ENCODE measurements at regions of chr20 and their contacts with region 1.

Region 1: DNA sequence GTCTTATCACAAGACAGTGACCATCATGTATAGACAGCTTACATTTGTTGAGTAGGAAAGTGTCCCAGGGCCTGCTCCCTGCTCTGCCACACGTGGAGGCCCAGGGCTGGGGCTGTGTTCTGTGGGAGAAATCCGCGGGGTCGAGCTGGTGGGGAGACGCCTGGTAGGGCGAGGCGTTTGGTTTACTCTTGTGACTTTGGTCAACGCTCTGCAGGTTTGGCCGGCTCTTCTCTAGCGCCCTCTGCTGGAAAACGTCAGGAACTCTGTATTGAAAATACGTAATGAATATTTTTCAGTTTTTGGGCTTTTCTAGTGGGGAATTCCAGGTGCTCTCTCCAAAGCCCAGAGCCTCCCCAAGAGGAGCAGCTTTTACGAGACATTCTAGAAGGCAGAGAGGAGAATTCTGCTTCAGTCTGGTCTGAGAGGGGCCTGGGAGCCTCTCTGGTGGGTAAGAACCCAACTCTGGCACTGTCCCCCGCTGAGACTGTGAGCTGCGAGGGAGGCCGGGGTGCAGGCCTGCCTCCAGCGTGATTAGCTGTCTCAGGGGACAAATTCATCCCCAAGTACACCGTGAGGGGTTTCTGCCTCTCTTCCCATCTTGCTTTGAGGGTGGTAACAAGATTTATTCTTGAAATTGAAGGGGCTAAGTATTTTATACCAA is 112.6 kb upstream of the RALGAPA2 start:
- DNase-seq: peak; percentile 66
- H3K4me3 Mint-ChIP-seq: no peak overlapping the region
- H3K27ac Mint-ChIP-seq: no peak overlapping the region
- H3K4me1 Mint-ChIP-seq: peaks cover 16% of the 10 kb centered on the region
- H3K27me3 Mint-ChIP-seq: peaks cover 15% of the 10 kb centered on the region
- CTCF ChIP-seq: peak; percentile 79

Region 2: DNA sequence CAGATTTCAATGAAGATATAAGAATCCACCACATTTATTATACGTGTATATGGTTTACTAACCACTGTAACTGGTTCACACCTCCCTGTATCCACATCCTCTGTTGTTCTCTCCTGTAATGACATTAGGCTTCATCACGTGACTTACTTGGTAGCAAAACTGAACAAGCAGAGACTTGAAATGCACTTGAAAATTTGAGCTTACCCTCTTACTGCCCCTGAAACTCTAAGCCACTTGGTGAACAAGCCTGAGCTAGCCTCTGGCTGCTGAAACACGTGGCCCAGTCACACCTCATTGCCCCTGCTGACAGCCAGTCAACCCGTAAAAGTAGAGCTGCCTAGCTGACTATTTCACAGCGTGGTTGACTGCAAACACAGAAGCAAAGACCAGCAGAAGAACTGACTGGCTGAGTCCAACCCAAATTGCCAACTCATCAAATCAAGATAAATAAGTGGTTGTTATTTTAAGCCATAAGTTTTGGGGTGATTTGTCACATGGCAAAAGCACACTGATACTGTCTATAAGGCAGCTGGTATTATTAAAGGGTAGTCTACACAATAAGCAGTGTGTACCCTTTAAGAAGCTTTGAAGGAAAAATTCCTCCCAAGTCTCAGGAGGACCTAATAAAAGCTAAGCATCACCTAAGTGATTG is 221.6 kb before region 1 on chr20:
- CTCF ChIA-PET with region 1: interaction called, 16 read pairs
- POLR2A ChIA-PET with region 1: interaction called, 4 read pairs
- intact Hi-C with region 1: no loop called
- DNase-seq: peak; percentile 88
- H3K4me3 Mint-ChIP-seq: no peak overlapping the region
- H3K27ac Mint-ChIP-seq: peak overlapping the region; percentile 50
- H3K4me1 Mint-ChIP-seq: peaks cover 14% of the 10 kb centered on the region
- H3K27me3 Mint-ChIP-seq: no peaks in the 10 kb centered on the region
- CTCF ChIP-seq: no peak

Region 3: GRCh38 chr20:20695250-20695816 is 129.7 kb before region 1 on chr20:
- CTCF ChIA-PET with region 1: interaction called, 16 read pairs
- POLR2A ChIA-PET with region 1: no interaction called
- intact Hi-C with region 1: no loop called
- DNase-seq: peak; percentile 82
- H3K4me3 Mint-ChIP-seq: no peak overlapping the region
- H3K27ac Mint-ChIP-seq: no peak overlapping the region
- H3K4me1 Mint-ChIP-seq: peaks cover 30% of the 10 kb centered on the region
- H3K27me3 Mint-ChIP-seq: no peaks in the 10 kb centered on the region
- CTCF ChIP-seq: no peak

Region 4: GRCh38 chr20:20772602-20773001 is 52.5 kb before region 1 on chr20:
- CTCF ChIA-PET with region 1: interaction called, 11 read pairs
- POLR2A ChIA-PET with region 1: interaction called, 8 read pairs
- intact Hi-C with region 1: no loop called
- DNase-seq: peak; percentile 94
- H3K4me3 Mint-ChIP-seq: no peak overlapping the region
- H3K27ac Mint-ChIP-seq: no peak overlapping the region
- H3K4me1 Mint-ChIP-seq: peaks cover 27% of the 10 kb centered on the region
- H3K27me3 Mint-ChIP-seq: no peaks in the 10 kb centered on the region
- CTCF ChIP-seq: no peak

Region 5: GRCh38 chr20:20806121-20807095 is 18.6 kb before region 1 on chr20:
- CTCF ChIA-PET with region 1: interaction called, 21 read pairs
- POLR2A ChIA-PET with region 1: interaction called, 3 read pairs
- intact Hi-C with region 1: no loop called
- DNase-seq: no peak
- H3K4me3 Mint-ChIP-seq: no peak overlapping the region
- H3K27ac Mint-ChIP-seq: no peak overlapping the region
- H3K4me1 Mint-ChIP-seq: no peaks in the 10 kb centered on the region
- H3K27me3 Mint-ChIP-seq: no peaks in the 10 kb centered on the region
- CTCF ChIP-seq: no peak

Region 6: DNA sequence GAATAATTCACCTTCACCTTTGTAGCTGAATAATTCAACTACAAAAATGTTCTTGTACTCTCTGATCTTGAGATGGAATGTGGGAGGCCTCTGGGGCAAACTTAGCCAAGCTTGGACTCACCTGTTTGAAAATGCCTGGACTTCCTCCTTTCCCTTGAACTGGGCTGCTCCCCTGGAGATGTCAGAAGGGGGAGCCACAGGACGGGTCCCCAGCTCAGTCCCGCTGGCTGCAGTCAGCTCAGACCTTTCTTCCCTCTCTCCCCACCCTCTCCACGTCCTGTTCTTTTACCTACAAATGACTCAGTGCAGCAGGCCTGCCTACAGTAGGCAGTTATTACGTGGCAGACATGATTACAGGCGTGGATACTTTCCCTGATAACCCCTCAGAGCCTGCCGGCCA is 18.9 kb after region 1 on chr20:
- CTCF ChIA-PET with region 1: interaction called, 146 read pairs
- POLR2A ChIA-PET with region 1: interaction called, 3 read pairs
- intact Hi-C with region 1: no loop called
- DNase-seq: peak; percentile 23
- H3K4me3 Mint-ChIP-seq: no peak overlapping the region
- H3K27ac Mint-ChIP-seq: no peak overlapping the region
- H3K4me1 Mint-ChIP-seq: no peaks in the 10 kb centered on the region
- H3K27me3 Mint-ChIP-seq: no peaks in the 10 kb centered on the region
- CTCF ChIP-seq: no peak

Region 7: DNA sequence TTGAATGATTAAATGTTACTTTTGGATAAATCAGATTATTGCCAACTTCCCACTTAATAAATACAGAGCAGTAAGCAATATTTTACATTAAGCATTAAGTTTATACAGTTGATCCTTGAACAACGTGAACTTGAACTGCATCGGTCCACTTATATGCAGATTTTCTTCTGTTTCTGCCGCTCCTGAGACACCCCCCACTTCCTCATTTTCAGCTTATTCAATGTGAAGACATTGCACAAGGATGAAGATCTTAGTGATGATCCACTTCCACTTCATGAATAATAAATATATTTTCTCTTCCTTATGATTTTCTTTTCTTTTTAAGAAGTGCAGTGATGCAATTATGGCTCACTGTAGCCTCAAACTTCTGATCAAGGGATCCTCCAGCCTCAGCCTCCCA is 114.0 kb after region 1 on chr20:
- CTCF ChIA-PET with region 1: no interaction called
- POLR2A ChIA-PET with region 1: no interaction called
- intact Hi-C with region 1: no loop called
- DNase-seq: no peak
- H3K4me3 Mint-ChIP-seq: no peak overlapping the region
- H3K27ac Mint-ChIP-seq: no peak overlapping the region
- H3K4me1 Mint-ChIP-seq: no peaks in the 10 kb centered on the region
- H3K27me3 Mint-ChIP-seq: no peaks in the 10 kb centered on the region
- CTCF ChIP-seq: no peak

Measured in MCF 10A (cell line).